Activated T-helper 2 cell treated with anti-CD3 and anti-CD28 coated beads, Interferon-gamma antibody, Interleukin-2, Interleukin-4, amounts not matched to agents 10 μg/mL and 5 μg/mL and 100 μg/mL, durations not matched to agents 14 hours and 24 hours and 36 hours (primary cell): ENCODE measurements at regions of chrX and their contacts with region 1.

Region 1: GRCh38 chrX:9677098-9677739 is 88.4 kb downstream of the GPR143 start:
- DNase-seq: peak; percentile 36
- H3K4me3 Mint-ChIP-seq: peak overlapping the region; percentile 37
- H3K27ac Mint-ChIP-seq: peak overlapping the region; percentile 71
- H3K4me1 Mint-ChIP-seq: peaks cover 29% of the 10 kb centered on the region
- H3K27me3 Mint-ChIP-seq: no peaks in the 10 kb centered on the region

Region 2: GRCh38 chrX:9148621-9149385 is 528.4 kb before region 1 on chrX:
- intact Hi-C with region 1: no loop called
- DNase-seq: no peak
- H3K4me3 Mint-ChIP-seq: no peak overlapping the region
- H3K27ac Mint-ChIP-seq: no peak overlapping the region
- H3K4me1 Mint-ChIP-seq: peaks cover 9% of the 10 kb centered on the region
- H3K27me3 Mint-ChIP-seq: no peaks in the 10 kb centered on the region

Region 3: DNA sequence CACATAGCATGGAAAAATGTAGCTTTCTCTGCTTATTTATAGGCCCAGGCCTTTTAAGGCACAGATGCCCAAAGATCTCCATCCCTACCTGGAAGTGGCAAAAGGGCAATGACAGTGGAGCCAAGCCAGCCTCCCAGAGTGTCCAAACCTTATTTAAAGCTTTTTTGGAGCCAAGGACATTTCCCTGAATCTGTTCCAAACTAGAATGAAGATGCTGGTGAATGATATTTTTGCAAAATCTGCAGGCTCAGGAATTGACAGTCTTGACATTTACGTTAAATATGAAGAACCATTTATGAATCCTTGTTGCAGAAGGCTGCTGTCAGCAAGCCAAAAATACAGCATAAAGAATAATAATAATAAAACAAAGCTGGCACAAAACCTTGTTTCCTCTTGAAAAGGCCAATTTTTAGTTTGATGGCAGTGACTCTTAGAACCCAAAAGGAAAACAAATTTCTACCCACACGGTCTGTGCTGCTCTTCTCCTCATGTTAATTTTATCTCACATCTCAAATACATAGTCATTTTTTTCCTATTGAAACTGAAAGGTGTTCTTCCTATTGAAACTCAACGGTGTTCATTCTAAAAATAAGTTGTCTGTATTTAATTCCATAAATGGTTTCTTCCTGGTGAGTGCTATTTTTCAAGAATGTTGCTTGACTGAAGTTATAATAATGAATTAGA is 418.7 kb before region 1 on chrX:
- intact Hi-C with region 1: loop called (anchors 5 kb)
- DNase-seq: no peak
- H3K4me3 Mint-ChIP-seq: no peak overlapping the region
- H3K27ac Mint-ChIP-seq: peak overlapping the region; percentile 84
- H3K4me1 Mint-ChIP-seq: peaks cover 37% of the 10 kb centered on the region
- H3K27me3 Mint-ChIP-seq: no peaks in the 10 kb centered on the region

Region 4: DNA sequence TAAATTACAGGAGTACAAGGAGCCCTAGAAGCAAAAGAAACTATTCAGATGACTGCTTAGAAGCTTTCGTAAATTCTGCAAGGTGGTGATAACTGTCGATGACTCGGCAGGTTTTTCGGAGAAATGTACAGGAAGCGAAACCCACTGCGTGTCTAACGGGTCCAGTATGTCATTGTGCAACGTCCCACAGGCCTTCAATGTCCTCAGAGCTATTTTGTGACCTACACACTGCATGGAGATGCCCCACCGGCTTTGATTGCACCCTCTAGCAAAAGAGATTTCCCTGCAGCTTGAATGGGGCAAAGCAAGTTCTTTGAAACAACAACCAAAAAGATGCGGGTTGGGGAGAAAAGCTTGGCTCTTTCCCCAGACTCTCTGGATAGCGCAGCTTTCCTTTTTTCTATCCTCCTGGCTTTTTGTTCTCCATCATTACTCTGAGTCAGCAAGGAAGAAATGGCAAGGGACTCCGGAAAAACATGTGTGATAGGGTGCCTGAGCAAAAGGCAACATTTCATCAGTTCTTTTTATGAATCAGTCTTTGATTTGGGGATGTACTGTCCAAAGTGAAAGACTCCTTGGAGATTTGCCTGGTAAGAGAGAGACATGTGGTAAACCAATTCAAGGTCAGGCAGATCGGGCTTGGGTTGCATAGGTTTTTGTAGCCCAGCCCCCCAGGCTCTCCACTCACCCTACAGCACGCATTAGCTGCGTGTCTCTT is 324.4 kb before region 1 on chrX:
- intact Hi-C with region 1: loop called (anchors 1 kb)
- DNase-seq: peak; percentile 56
- H3K4me3 Mint-ChIP-seq: peak overlapping the region; percentile 56
- H3K27ac Mint-ChIP-seq: peak overlapping the region; percentile 82
- H3K4me1 Mint-ChIP-seq: peaks cover 39% of the 10 kb centered on the region
- H3K27me3 Mint-ChIP-seq: no peaks in the 10 kb centered on the region

Region 5: GRCh38 chrX:9456250-9457074 is 220.8 kb before region 1 on chrX:
- intact Hi-C with region 1: loop called (anchors 1 kb)
- DNase-seq: peak; percentile 27
- H3K4me3 Mint-ChIP-seq: no peak overlapping the region
- H3K27ac Mint-ChIP-seq: peak overlapping the region; percentile 90
- H3K4me1 Mint-ChIP-seq: peaks cover 28% of the 10 kb centered on the region
- H3K27me3 Mint-ChIP-seq: no peaks in the 10 kb centered on the region

Region 6: DNA sequence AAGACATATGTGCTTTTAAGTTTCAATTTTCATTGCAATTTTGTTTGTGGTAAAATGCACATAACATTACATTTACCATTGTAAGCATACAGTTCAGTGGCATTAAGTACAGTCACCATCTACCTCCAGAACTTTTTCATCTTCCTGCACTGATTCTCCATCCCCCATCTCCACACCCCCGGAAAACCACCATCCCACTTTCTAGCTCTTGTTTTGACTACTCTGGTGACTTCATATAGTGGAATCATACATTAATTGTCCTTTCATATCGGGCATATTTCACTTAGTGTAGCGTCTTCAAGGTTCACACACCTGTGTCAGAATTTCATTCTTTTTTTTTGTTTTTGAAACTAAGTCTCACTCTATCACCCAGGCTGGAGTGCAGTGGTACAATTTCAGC is 55.1 kb before region 1 on chrX:
- intact Hi-C with region 1: loop called (anchors 5 kb)
- DNase-seq: no peak
- H3K4me3 Mint-ChIP-seq: no peak overlapping the region
- H3K27ac Mint-ChIP-seq: no peak overlapping the region
- H3K4me1 Mint-ChIP-seq: peaks cover 30% of the 10 kb centered on the region
- H3K27me3 Mint-ChIP-seq: no peaks in the 10 kb centered on the region

Region 7: GRCh38 chrX:9644335-9644734 is 32.9 kb before region 1 on chrX:
- intact Hi-C with region 1: loop called (anchors 1 kb)
- DNase-seq: peak; percentile 26
- H3K4me3 Mint-ChIP-seq: no peak overlapping the region
- H3K27ac Mint-ChIP-seq: peak overlapping the region; percentile 17
- H3K4me1 Mint-ChIP-seq: peaks cover 24% of the 10 kb centered on the region
- H3K27me3 Mint-ChIP-seq: no peaks in the 10 kb centered on the region